ENCODE measurements at regions of chr15 and their contacts with region 1.

Region 1: GRCh38 chr15:72783563-72784237 is at the start of gene ADPGK:
- DNase-seq: peak; percentile 78
- ATAC-seq: peak; percentile 92
- H3K4me3 ChIP-seq: peak within 1 kb of the TSS; percentile 72 to 98
- H3K27ac ChIP-seq: peak within 1 kb of the TSS; percentile 57
- H3K4me1 ChIP-seq: peaks cover 0 to 21% of the 10 kb centered on the region in 2 experiments; a peak in 3 of 4 replicates
- H3K27me3 ChIP-seq: no peaks in the 10 kb centered on the region
- CTCF ChIP-seq: no peak
- POLR2A ChIP-seq: peak; percentile 84
- RAD21 ChIP-seq: no peak
- total RNA-seq, gene ADPGK: 41.5 TPM

Region 2: DNA sequence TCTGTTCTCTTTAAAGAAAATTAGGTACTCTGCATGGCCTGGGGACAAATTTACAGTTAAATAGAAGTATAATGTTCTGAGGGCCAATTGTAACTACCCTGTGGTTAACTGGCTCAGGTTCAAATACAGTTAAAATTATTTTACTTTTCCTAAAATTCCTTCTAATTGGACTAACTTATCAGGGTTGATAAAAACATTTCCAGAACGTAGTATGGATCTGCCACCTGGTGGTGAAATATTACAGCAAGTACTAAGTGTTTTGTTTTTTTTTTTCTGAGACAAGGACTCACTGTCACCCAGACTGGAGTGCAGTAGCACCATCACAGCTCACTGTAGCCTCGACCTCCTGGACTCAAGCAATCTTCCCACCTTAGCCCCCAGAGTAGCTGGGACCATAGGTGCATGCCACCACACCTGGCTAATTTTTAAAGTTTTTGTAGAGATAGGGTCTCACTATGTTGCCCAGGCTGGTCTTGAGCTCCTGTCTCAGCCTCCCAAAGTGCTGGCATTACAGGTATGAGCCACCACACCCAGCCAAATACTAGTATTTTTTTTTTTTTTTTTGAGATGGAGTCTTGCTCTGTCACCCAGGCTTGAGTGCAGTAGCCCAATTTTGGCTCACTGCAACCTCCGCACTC is 297.7 kb after region 1 on chr15:
- CTCF ChIA-PET with region 1: no interaction called
- POLR2A ChIA-PET with region 1: no interaction called
- RAD21 ChIA-PET with region 1: no interaction called
- intact Hi-C with region 1: loop called (anchors 1 kb)
- DNase-seq: peak; percentile 54
- ATAC-seq: peak; percentile 58
- H3K4me3 ChIP-seq: no peak overlapping the region
- H3K27ac ChIP-seq: no peak overlapping the region
- H3K4me1 ChIP-seq: no peaks in the 10 kb centered on the region
- H3K27me3 ChIP-seq: no peaks in the 10 kb centered on the region
- CTCF ChIP-seq: peak; percentile 49 to 79 (median 69); a peak in 5 of 6 replicates
- POLR2A ChIP-seq: no peak
- RAD21 ChIP-seq: peak; percentile 86

Region 3: GRCh38 chr15:73240866-73241499 is 457.3 kb after region 1 on chr15:
- CTCF ChIA-PET with region 1: no interaction called
- POLR2A ChIA-PET with region 1: no interaction called
- RAD21 ChIA-PET with region 1: no interaction called
- intact Hi-C with region 1: loop called (anchors 5 kb)
- DNase-seq: peak; percentile 61
- ATAC-seq: peak; percentile 75
- H3K4me3 ChIP-seq: no peak overlapping the region
- H3K27ac ChIP-seq: no peak overlapping the region
- H3K4me1 ChIP-seq: no peaks in the 10 kb centered on the region
- H3K27me3 ChIP-seq: no peaks in the 10 kb centered on the region
- CTCF ChIP-seq: peak; percentile 62 to 88 (median 78); a peak in 5 of 6 replicates
- POLR2A ChIP-seq: no peak
- RAD21 ChIP-seq: peak; percentile 70

Region 4: GRCh38 chr15:73273181-73274002 is 489.7 kb after region 1 on chr15:
- CTCF ChIA-PET with region 1: no interaction called
- POLR2A ChIA-PET with region 1: no interaction called
- RAD21 ChIA-PET with region 1: no interaction called
- intact Hi-C with region 1: loop called (anchors 5 kb)
- DNase-seq: peak; percentile 15
- ATAC-seq: peak; percentile 97
- H3K4me3 ChIP-seq: no peak overlapping the region
- H3K27ac ChIP-seq: no peak overlapping the region
- H3K4me1 ChIP-seq: no peaks in the 10 kb centered on the region
- H3K27me3 ChIP-seq: no peaks in the 10 kb centered on the region
- CTCF ChIP-seq: peak; percentile 53 to 86 (median 85); a peak in 5 of 6 replicates
- POLR2A ChIP-seq: no peak
- RAD21 ChIP-seq: peak; percentile 66

Measured in HCT116 (cell line).